ENCODE measurements at regions of chr1 and their contacts with region 1.

Region 1: GRCh38 chr1:9784508-9785133 is 39.1 kb downstream of the CLSTN1 start:
- DNase-seq: peak; percentile 72

Region 2: DNA sequence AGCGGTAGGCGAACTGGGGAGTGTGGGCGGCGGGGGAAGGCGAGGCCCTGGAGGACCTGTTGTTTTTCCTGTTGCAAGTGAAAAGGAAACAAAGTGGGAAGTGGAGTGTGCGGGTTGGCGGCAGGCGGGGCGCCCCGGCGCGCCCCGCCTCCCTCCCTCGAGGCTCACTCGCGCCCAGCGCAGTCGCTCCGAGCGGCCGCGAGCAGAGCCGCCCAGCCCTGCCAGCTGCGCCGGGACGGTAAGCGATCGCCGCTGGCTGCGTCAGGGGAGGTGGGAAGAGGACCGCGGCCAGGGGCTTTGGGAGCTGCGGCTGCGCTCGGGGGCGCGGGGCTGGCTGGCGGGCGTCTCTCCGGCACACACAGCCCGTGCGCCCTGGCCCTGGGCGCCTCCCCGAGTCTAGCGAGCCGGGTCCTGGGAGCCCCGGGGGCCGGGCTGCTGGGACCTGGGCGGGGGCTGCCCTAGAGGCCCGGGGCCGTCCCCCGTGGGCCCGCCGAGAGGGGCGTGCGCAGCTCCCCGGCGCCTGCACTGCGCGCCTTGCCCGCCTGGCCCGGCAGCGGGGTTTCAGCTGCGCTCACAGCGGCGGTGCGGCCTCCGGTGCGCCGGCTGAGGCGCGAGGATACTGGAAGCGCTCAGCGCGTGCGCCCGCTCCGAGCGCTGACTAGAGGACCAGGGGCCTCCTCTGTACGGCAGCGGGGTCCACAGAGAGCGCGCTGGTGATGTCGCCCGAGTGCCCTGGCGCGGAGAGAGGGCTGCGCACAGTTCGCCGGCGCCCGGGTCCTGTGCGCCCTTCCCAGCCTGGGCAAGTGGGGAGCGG is 132.8 kb before region 1 on chr1 and contains the start of gene PIK3CD:
- in situ Hi-C with region 1: loop called (anchors 25 kb)
- DNase-seq: no peak
- total RNA-seq, gene PIK3CD: 59.4 and 73.9 TPM in 2 replicates

Region 3: DNA sequence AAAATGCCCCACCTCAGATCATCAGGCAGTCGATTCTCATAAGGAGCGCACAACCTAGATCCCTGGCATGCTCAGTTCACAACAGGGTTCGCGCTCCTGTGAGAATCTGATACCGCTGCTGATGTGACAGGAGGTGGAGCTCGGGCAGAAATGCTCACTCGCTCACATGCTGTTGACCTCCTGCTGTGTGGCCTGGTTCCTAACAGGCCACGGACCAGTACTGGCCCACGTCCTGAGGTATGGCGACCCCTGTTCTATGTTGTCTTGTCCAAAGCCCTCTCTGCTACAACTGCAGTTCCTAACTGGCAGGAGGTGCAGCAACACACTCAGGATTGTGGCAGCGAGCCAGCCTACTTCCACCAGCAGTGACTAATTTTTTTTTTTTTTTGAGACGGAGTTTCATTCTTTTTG is 31.5 kb before region 1 on chr1:
- in situ Hi-C with region 1: no loop called
- DNase-seq: peak; percentile 76